ENCODE measurements at regions of chr11 and their contacts with region 1.

Region 1: DNA sequence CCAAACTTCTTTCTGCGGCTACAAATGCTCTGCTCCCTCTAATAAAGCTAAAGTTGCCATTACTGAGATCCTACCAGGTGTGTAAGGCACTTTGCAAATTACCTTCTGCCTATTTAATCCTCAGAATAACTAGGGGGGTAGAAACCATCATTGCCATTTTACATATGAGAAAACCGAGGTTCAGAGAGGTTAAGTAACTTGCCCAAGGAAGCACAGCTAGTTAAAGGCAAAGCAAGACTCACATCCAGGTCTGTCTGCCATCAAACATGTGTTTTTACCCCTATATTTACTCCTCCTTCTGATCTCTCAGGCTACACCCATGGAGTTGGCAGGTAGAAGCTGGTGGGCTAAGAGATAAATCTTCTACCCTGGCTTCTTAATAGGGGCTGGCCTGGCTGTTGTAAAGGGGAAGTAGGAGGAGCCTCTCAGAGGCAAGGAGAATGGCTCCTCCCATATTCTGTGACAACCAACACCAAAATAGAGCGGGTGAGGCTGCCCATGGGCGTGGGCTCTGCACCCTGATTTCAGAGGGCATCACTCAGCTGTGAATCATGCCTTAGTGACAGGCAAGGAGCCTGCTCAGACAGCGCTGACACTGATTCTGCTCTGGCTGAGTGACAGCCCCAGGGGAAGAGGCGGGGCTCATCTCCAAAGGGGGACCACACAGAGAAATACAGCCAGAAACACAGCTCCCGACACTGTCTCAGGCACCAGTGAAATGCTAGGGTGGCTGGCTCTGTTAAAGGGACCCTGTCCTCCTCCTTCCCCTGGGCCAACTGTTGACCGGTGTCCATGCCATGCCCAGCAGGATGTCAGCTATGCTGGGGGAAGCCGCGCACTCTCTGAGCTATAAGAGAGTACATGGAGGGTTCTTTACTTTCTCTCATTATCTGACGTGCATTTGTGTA is 106.8 kb downstream of the ABTB2 start:
- DNase-seq: peak; percentile 86
- ATAC-seq: peak; percentile 98
- H3K4me3 Mint-ChIP-seq: no peak overlapping the region
- H3K27ac Mint-ChIP-seq: no peak overlapping the region
- H3K4me1 Mint-ChIP-seq: peaks cover 60% of the 10 kb centered on the region
- H3K27me3 Mint-ChIP-seq: peaks cover 20% of the 10 kb centered on the region

Region 2: DNA sequence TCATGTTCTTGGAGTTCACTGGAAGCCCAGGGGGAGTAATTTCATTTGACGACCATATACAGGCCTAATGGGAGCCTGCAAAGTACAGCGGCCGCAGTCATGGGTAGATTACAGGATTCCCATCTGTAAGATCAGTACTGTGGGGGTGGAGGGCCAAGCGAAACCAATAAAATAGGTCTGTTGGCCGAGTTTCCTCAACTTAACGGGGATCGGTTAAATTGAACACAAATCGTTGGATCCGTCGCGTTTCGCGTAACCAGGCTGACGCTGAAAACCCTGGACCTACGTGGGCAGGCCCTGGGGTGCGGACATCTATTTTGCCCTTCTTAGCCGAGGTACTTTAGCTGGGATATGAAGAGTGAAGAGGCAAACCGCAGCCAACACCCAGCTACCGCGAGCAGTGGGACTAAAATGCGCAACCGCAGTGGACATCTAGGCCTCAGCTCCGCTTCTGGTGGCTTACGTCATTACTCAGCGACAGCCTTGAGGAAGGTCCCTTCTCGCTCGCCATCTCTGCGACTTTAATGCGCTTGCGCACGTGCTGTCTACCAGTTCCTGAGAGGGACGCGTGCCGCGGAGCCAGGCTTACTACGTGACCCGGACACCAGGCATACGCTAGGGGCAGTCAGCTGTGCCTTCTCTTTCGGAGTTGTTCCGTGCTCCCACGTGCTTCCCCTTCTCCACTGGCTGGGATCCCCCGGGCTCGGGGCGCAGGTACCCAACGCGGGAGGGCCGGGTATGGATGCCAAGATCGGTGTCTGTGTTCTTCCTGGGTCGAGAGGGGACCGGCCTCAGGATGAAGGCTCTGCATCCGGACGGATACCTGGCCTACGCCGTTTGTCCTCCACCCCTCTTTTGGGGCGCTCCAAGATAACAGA is 145.7 kb before region 1 on chr11 and contains the start of gene NAT10:
- CTCF ChIA-PET with region 1: no interaction called
- POLR2A ChIA-PET with region 1: interaction called, 4 read pairs
- intact Hi-C with region 1: loop called in 1 of 2 experiments (anchors 5 kb)
- DNase-seq: peak; percentile 98
- ATAC-seq: peak; percentile 93
- H3K4me3 Mint-ChIP-seq: peak within 1 kb of the TSS; percentile 97
- H3K27ac Mint-ChIP-seq: peak within 1 kb of the TSS; percentile 99
- H3K4me1 Mint-ChIP-seq: peaks cover 57% of the 10 kb centered on the region
- H3K27me3 Mint-ChIP-seq: no peaks in the 10 kb centered on the region
- total RNA-seq, gene NAT10: 142 to 147 TPM

Region 3: DNA sequence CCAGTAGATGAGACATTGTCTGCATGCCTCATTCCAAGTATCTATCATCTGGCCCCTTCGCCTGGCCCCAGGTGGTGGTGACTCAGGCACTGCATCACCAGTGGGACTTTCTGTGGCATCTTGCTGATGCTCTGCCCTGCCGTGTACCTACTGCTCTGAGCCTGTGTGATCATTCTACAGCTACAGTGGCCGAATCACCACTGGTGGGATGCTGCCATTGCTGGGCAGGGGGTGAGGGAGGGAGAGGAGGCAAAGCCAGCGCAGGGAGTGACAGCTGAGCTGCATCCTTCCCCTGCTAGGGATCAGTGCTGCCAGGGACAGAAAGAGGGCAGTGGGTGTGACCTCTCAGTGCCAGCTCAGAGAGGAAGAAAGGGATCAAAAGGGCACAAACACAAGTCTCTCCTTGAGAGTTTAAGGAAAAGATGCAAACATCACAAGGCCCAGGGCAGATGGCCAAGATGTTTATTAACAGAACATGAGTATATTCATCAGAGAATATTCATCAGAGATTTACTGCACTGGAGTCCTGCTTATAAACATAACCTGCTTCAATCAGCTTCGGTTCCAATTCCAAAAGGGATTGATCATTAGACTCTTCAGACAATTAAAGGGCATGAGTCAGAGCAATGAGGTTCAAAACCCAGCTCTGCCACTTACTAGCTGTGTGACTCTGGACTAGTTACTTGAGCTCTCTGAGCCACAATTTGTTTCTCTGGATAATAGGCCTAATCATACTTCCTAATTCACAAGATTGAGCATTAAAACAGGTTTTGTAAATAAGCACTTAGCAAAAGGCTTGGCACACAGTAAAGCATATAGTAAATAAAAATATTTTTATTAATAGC is 35.8 kb before region 1 on chr11:
- CTCF ChIA-PET with region 1: interaction called, 4 read pairs
- POLR2A ChIA-PET with region 1: no interaction called
- intact Hi-C with region 1: loop called in 1 of 2 experiments (anchors 1 kb)
- DNase-seq: peak; percentile 92
- ATAC-seq: peak; percentile 99
- H3K4me3 Mint-ChIP-seq: no peak overlapping the region
- H3K27ac Mint-ChIP-seq: peak overlapping the region; percentile 74
- H3K4me1 Mint-ChIP-seq: peaks cover 22% of the 10 kb centered on the region
- H3K27me3 Mint-ChIP-seq: peaks cover 6% of the 10 kb centered on the region

Region 4: DNA sequence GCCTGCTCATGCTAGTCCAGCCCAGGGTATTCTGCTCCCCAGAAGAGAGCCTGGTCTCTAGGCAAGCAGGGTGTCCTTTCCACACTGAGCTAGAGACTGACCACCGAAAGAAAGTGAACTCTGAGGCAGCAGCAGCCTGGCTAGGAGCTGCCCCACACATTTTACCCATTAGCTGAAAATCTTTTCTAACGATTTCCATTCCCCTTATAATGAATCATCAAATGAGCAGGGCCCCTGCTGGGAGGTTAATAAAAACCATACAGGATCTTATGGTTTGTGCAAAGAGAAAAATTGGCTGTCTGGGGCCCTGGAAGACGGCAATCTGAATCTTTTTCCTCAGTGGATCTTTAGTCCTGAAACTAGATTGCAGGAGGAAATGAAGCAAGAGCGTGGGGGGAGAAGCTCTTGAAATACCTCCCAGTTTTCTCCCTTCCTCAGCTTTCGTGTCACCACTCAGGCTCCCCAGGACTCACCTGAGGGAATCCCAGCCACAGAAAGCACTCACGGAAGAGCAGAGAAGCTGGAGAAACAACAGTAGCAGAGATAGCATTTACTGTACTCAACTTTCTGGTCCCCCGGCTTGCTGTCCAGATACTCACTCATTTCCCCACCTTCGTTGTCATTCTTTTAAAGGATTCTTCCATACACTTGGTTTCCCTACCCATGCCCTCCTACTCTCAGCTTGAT is 813.3 kb after region 1 on chr11:
- CTCF ChIA-PET with region 1: no interaction called
- POLR2A ChIA-PET with region 1: no interaction called
- intact Hi-C with region 1: no loop called
- DNase-seq: no peak
- ATAC-seq: no peak
- H3K4me3 Mint-ChIP-seq: no peak overlapping the region
- H3K27ac Mint-ChIP-seq: no peak overlapping the region
- H3K4me1 Mint-ChIP-seq: peaks cover 45% of the 10 kb centered on the region
- H3K27me3 Mint-ChIP-seq: peaks cover 3% of the 10 kb centered on the region

Measured in activated CD4-positive, alpha-beta T cell treated with anti-CD3 and anti-CD28 coated beads for 36 hours (primary cell).